AG04450 (cell line): ENCODE measurements at regions of chr14 and their contacts with region 1.

Region 1: GRCh38 chr14:63282997-63283883 is 35.5 kb downstream of the GPHB5 start:
- DNase-seq: no peak
- H3K4me3 ChIP-seq: no peak overlapping the region
- H3K27ac ChIP-seq: no peak overlapping the region
- H3K27me3 ChIP-seq: no peaks in the 10 kb centered on the region
- CTCF ChIP-seq: no peak

Region 2: GRCh38 chr14:63296060-63296563 is 12.9 kb after region 1 on chr14:
- CTCF ChIA-PET with region 1: no interaction called
- POLR2A ChIA-PET with region 1: no interaction called
- DNase-seq: no peak
- H3K4me3 ChIP-seq: no peak overlapping the region
- H3K27ac ChIP-seq: no peak overlapping the region
- H3K27me3 ChIP-seq: peaks cover 3% of the 10 kb centered on the region
- CTCF ChIP-seq: no peak

Region 3: GRCh38 chr14:63551332-63551731 is 268.1 kb after region 1 on chr14:
- CTCF ChIA-PET with region 1: interaction called, 12 read pairs
- POLR2A ChIA-PET with region 1: no interaction called
- DNase-seq: no peak
- H3K4me3 ChIP-seq: no peak overlapping the region
- H3K27ac ChIP-seq: no peak overlapping the region
- H3K27me3 ChIP-seq: no peaks in the 10 kb centered on the region
- CTCF ChIP-seq: no peak